Activated CD4-positive, alpha-beta T cell treated with anti-CD3 and anti-CD28 coated beads, Interleukin-2, amount 10 ng/mL, durations not matched to agents 24 days and 14 days (primary cell): ENCODE measurements at regions of chr15 and their contacts with region 1.

Region 1: GRCh38 chr15:50134520-50135024 is 15.5 kb upstream of the ATP8B4 start:
- DNase-seq: peak; percentile 67
- H3K4me3 Mint-ChIP-seq: peak overlapping the region; percentile 63
- H3K27ac Mint-ChIP-seq: peak overlapping the region; percentile 95
- H3K4me1 Mint-ChIP-seq: peaks cover 52% of the 10 kb centered on the region
- H3K27me3 Mint-ChIP-seq: peaks cover 2% of the 10 kb centered on the region

Region 2: DNA sequence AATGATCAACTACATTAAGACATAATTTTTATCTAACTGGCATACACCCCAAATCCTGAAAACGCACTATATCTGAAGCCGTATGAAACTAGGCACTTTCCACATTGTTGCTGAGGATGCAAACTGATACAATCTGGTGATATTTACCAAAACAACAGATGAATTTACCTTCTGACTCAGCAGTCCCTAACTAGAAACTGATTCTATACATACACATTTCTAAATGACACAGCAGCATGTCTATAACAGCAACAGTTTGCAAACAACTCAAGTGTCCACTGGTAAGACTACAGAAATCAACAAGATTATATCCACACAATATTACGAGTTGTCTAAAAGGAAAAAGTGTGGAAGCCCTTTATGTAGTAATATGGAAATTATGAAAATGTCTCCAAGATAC is 1111.2 kb before region 1 on chr15:
- intact Hi-C with region 1: loop called (anchors 10 kb)
- DNase-seq: no peak
- H3K4me3 Mint-ChIP-seq: no peak overlapping the region
- H3K27ac Mint-ChIP-seq: peak overlapping the region; percentile 48
- H3K4me1 Mint-ChIP-seq: peaks cover 21% of the 10 kb centered on the region
- H3K27me3 Mint-ChIP-seq: no peaks in the 10 kb centered on the region

Region 3: DNA sequence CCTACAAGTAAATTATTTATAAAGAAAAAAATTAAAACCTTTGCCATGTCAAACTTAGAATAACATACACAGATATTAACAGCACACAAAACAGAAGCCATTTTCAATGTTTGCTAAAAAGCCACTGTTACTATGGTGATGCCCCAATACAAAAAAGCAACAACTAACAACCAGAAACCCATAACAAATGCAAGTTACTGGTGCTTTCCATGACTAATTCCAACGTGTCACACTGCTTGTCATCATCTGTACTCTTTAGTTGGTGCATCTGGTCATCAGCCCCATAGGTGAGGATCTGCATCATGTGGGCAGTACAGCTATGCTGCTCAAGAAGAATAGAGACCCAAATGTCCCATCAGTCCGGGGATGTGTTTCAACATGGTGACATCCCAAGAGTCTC is 68.4 kb before region 1 on chr15:
- intact Hi-C with region 1: loop called (anchors 1 kb)
- DNase-seq: peak; percentile 80
- H3K4me3 Mint-ChIP-seq: peak overlapping the region; percentile 27
- H3K27ac Mint-ChIP-seq: peak overlapping the region; percentile 91
- H3K4me1 Mint-ChIP-seq: peaks cover 38% of the 10 kb centered on the region
- H3K27me3 Mint-ChIP-seq: no peaks in the 10 kb centered on the region

Region 4: DNA sequence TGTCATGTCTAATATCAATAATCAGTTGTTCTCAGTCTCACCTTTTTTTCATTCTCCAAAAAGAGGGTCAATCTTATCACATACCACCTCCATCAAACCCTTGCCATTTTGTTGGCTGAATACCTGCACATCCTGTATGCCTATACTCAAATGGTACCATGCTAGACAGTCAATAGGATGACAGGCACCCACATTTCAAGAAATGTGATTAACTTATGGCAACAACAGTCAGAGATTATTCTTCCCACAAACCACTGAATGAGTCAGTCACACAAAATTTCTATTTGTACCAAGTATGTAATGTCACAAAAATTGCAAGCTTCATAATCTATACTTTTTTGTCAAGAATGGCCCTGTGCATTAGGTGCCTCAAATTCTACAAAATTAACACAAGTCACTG is 42.3 kb after region 1 on chr15:
- intact Hi-C with region 1: loop called (anchors 1 kb)
- DNase-seq: no peak
- H3K4me3 Mint-ChIP-seq: no peak overlapping the region
- H3K27ac Mint-ChIP-seq: peak overlapping the region; percentile 68
- H3K4me1 Mint-ChIP-seq: peaks cover 31% of the 10 kb centered on the region
- H3K27me3 Mint-ChIP-seq: no peaks in the 10 kb centered on the region

Region 5: GRCh38 chr15:50190723-50191122 is 56.2 kb after region 1 on chr15:
- intact Hi-C with region 1: no loop called
- DNase-seq: no peak
- H3K4me3 Mint-ChIP-seq: no peak overlapping the region
- H3K27ac Mint-ChIP-seq: peak overlapping the region; percentile 14
- H3K4me1 Mint-ChIP-seq: peaks cover 49% of the 10 kb centered on the region
- H3K27me3 Mint-ChIP-seq: no peaks in the 10 kb centered on the region

Region 6: GRCh38 chr15:50562735-50563640 is 428.4 kb after region 1 on chr15:
- intact Hi-C with region 1: no loop called
- DNase-seq: peak; percentile 76
- H3K4me3 Mint-ChIP-seq: peak overlapping the region; percentile 29
- H3K27ac Mint-ChIP-seq: peak overlapping the region; percentile 87
- H3K4me1 Mint-ChIP-seq: peaks cover 13% of the 10 kb centered on the region
- H3K27me3 Mint-ChIP-seq: no peaks in the 10 kb centered on the region

Region 7: GRCh38 chr15:50765195-50765973 is 630.8 kb after region 1 on chr15 and contains the start of gene SPPL2A:
- intact Hi-C with region 1: loop called (anchors 2 kb)
- DNase-seq: peak; percentile 94
- H3K4me3 Mint-ChIP-seq: peak within 1 kb of the TSS; percentile 92
- H3K27ac Mint-ChIP-seq: peak within 1 kb of the TSS; percentile 97
- H3K4me1 Mint-ChIP-seq: peaks cover 54% of the 10 kb centered on the region
- H3K27me3 Mint-ChIP-seq: no peaks in the 10 kb centered on the region
- total RNA-seq, gene SPPL2A: 85.0 and 86.6 TPM in 2 replicates